CD14-positive monocyte (primary cell): ENCODE measurements at regions of chr9 and their contacts with region 1.

Region 1: GRCh38 chr9:129110740-129111527 is at the starts of genes CRAT and PTPA:
- DNase-seq: peak; percentile 94 to 97 (median 97)
- H3K4me3 ChIP-seq: peak within 1 kb of the TSS; percentile 83 to 99 (median 96)
- H3K4me3 Mint-ChIP-seq: peak within 1 kb of the TSS; percentile 94 to 95
- H3K27ac ChIP-seq: peak within 1 kb of the TSS; percentile 83 to 96
- H3K27ac Mint-ChIP-seq: peak within 1 kb of the TSS; percentile 94 to 98 (median 96)
- H3K4me1 ChIP-seq: peaks cover 50 to 60% of the 10 kb centered on the region in 2 donors
- H3K4me1 Mint-ChIP-seq: peaks cover 55% of the 10 kb centered on the region
- H3K27me3 ChIP-seq: no peaks in the 10 kb centered on the region
- H3K27me3 Mint-ChIP-seq: peaks cover 0 to 4% (median 0%) of the 10 kb centered on the region in 3 donors
- CTCF ChIP-seq: no peak
- polyA plus RNA-seq, gene CRAT: 12.2 to 19.4 (median 15.0) TPM
- polyA plus RNA-seq, gene PTPA: 11.7 to 38.5 (median 12.4) TPM

Region 2: GRCh38 chr9:129028192-129028957 is 82.6 kb before region 1 on chr9 and contains the start of gene SH3GLB2:
- intact Hi-C with region 1: loop called in 1 of 2 experiments (anchors 2 kb)
- DNase-seq: peak; percentile 92 to 97 (median 95)
- H3K4me3 ChIP-seq: peak within 1 kb of the TSS; percentile 47 to 78 (median 65)
- H3K4me3 Mint-ChIP-seq: peak within 1 kb of the TSS; percentile 71 to 85
- H3K27ac ChIP-seq: no peak within 1 kb of the TSS
- H3K27ac Mint-ChIP-seq: peak within 1 kb of the TSS in 1 of 7 donors; percentile 26
- H3K4me1 ChIP-seq: peaks cover 12 to 24% of the 10 kb centered on the region in 2 donors
- H3K4me1 Mint-ChIP-seq: peaks cover 20% of the 10 kb centered on the region
- H3K27me3 ChIP-seq: no peaks in the 10 kb centered on the region
- H3K27me3 Mint-ChIP-seq: no peaks in the 10 kb centered on the region
- CTCF ChIP-seq: peak; percentile 83
- polyA plus RNA-seq, gene SH3GLB2: 8.0 to 77.0 (median 25.9) TPM

Region 3: GRCh38 chr9:129080602-129081387 is 30.1 kb before region 1 on chr9 and contains the start of gene DOLPP1:
- intact Hi-C with region 1: loop called in 1 of 2 experiments (anchors 2 kb)
- DNase-seq: peak; percentile 99
- H3K4me3 ChIP-seq: peak within 1 kb of the TSS; percentile 54 to 93 (median 91)
- H3K4me3 Mint-ChIP-seq: peak within 1 kb of the TSS; percentile 85 to 88
- H3K27ac ChIP-seq: peak within 1 kb of the TSS; percentile 64 to 77
- H3K27ac Mint-ChIP-seq: peak within 1 kb of the TSS; percentile 63 to 88 (median 79)
- H3K4me1 ChIP-seq: peaks cover 18 to 22% of the 10 kb centered on the region in 2 donors
- H3K4me1 Mint-ChIP-seq: peaks cover 20% of the 10 kb centered on the region
- H3K27me3 ChIP-seq: no peaks in the 10 kb centered on the region
- H3K27me3 Mint-ChIP-seq: peaks cover 0 to 5% (median 2%) of the 10 kb centered on the region in 3 donors
- CTCF ChIP-seq: no peak
- polyA plus RNA-seq, gene DOLPP1: 5.4 to 6.6 (median 5.9) TPM

Region 4: DNA sequence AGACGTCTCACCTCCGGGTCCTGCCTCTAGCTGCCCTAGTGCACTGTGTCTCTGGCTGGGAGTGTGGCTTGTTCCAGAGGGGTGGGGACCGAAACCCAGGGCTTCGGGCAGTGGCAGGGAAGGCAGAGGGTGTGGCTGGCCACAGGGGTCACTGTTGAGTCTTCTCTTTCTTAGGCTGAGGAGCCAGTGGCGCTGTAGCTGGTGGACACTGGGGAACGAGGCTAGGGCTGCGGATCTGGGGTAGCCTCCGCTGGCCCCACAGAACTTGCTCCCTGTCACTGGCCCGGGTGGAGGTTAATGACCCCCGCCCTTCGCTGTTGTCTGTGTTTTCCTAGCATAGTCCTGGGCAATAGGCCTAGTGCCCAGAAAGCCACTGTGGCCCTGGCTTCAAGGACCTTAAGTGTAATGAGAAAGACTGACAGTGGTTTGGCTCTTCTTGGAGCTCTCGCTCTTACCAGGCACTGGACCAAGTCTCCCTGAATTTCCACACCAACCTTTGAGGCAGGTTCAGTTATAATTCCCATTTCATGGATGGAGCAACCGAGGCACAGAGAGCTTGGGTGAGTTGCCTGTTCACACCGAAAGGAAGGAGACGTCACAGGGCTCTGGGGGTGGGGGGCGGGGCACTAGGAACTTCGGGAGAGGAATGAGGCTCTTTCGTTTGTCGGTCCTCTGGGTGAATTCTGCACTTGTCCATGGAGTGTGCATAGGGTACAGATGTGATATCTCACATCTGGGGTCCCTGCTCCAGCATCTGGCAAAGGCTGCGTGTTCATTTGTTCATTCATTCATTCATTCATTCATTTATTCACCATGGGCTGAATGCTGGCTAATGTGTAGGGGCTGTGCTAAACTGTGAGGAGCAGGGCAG is 71.9 kb after region 1 on chr9:
- intact Hi-C with region 1: no loop called
- DNase-seq: peak in 2 of 3 donors; percentile 37 to 40
- H3K4me3 ChIP-seq: no peak overlapping the region
- H3K4me3 Mint-ChIP-seq: no peak overlapping the region
- H3K27ac ChIP-seq: no peak overlapping the region
- H3K27ac Mint-ChIP-seq: peak overlapping the region in 2 of 7 donors; percentile 24 to 54
- H3K4me1 ChIP-seq: peaks cover 7 to 10% of the 10 kb centered on the region in 2 donors
- H3K4me1 Mint-ChIP-seq: peaks cover 5% of the 10 kb centered on the region
- H3K27me3 ChIP-seq: no peaks in the 10 kb centered on the region
- H3K27me3 Mint-ChIP-seq: peaks cover 4 to 13% (median 8%) of the 10 kb centered on the region in 3 donors
- CTCF ChIP-seq: peak; percentile 63